ENCODE measurements at regions of chr3 and their contacts with region 1.

Region 1: GRCh38 chr3:30112902-30113484 is 493.4 kb upstream of the TGFBR2 start:
- DNase-seq: no peak
- ATAC-seq: no peak
- H3K4me3 ChIP-seq: no peak overlapping the region
- H3K27ac ChIP-seq: no peak overlapping the region
- H3K4me1 ChIP-seq: no peaks in the 10 kb centered on the region
- H3K27me3 ChIP-seq: no peaks in the 10 kb centered on the region
- CTCF ChIP-seq: peak; percentile 65

Region 2: DNA sequence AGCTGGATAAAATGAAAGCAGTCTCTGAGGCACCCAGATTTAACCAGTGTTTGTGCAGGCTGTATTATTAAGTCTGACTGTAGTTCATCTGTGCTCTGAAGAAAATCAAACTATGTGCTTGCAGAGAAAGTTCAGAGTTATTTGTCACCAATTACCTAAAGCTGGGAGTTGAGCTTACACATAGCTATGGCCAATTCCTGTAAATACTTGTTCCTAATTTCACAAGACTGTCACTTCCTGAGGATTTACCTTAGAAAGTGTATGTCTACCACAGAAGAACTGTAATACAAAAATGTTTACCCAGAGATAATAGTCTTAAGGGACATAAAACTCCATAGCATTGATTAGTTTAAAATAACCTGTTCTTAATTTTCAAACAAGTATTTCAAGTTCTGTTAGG is 135.0 kb before region 1 on chr3:
- intact Hi-C with region 1: no loop called
- DNase-seq: no peak
- ATAC-seq: no peak
- H3K4me3 ChIP-seq: no peak overlapping the region
- H3K27ac ChIP-seq: no peak overlapping the region
- H3K4me1 ChIP-seq: no peaks in the 10 kb centered on the region
- H3K27me3 ChIP-seq: no peaks in the 10 kb centered on the region
- CTCF ChIP-seq: no peak

Region 3: GRCh38 chr3:30156586-30157498 is 43.8 kb after region 1 on chr3:
- intact Hi-C with region 1: no loop called
- DNase-seq: no peak
- ATAC-seq: no peak
- H3K4me3 ChIP-seq: no peak overlapping the region
- H3K27ac ChIP-seq: no peak overlapping the region
- H3K4me1 ChIP-seq: no peaks in the 10 kb centered on the region
- H3K27me3 ChIP-seq: no peaks in the 10 kb centered on the region
- CTCF ChIP-seq: no peak

Region 4: GRCh38 chr3:30199096-30199759 is 86.2 kb after region 1 on chr3:
- intact Hi-C with region 1: loop called (anchors 2 to 5 kb)
- DNase-seq: peak; percentile 68 to 81
- ATAC-seq: peak; percentile 54 to 78 (median 60)
- H3K4me3 ChIP-seq: no peak overlapping the region
- H3K27ac ChIP-seq: no peak overlapping the region
- H3K4me1 ChIP-seq: no peaks in the 10 kb centered on the region
- H3K27me3 ChIP-seq: no peaks in the 10 kb centered on the region
- CTCF ChIP-seq: peak; percentile 89

Region 5: GRCh38 chr3:30227571-30228301 is 114.7 kb after region 1 on chr3:
- intact Hi-C with region 1: no loop called
- DNase-seq: no peak
- ATAC-seq: peak in 2 of 4 donors; percentile 37 to 53
- H3K4me3 ChIP-seq: no peak overlapping the region
- H3K27ac ChIP-seq: no peak overlapping the region
- H3K4me1 ChIP-seq: peaks cover 9% of the 10 kb centered on the region
- H3K27me3 ChIP-seq: no peaks in the 10 kb centered on the region
- CTCF ChIP-seq: no peak

Measured in psoas muscle (tissue), 8 donors.